GM10248 (cell line): ENCODE measurements at regions of chr17 and their contacts with region 1.

Region 1: DNA sequence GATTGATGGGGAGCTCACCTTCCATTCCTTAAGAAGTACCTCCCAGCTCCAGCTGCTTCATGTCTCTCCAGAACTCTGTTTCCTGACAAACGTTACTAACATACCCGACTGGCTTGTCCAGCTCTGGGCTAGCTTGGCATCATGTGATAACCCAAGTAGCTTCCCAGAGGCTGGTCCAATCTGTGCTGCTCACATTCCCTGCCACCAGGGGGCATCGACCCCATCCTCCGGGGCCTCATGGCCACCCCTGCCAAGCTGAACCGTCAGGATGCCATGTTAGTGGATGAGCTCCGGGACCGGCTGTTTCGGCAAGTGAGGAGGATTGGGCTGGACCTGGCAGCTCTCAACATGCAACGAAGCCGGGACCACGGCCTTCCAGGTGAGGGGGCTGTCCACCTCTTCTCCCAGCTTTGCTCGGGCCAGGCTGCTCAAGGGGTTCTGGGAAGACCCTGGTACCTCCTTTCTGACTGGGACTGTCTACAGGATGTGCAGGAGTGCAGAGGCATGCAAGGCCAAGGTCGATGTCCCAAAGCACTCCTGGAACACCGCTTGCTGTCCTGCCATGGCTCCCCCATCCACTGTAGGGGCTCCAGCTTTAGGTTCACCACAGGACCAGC is 7.6 kb downstream of the EPX start:
- DNase-seq: peak; percentile 72
- CTCF ChIP-seq: peak; percentile 74

Region 2: DNA sequence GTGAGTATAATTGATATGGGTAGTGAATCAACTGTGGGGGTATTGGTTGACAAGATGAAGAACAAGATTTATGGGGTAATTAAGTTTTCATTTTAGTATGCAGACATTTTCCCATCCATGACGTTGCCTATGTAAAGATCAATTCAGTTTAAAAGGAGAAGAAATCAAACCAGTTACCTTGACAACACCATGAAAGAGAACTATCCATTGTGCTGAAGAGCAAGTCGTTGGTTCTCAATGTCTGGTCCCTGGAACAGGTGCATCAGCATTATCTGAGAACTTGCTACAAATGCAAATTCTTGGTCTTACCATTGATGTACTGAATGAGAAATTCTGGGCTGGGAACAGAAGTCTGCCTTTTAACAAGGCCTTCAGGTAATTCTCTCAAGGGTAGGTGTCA is 34.1 kb before region 1 on chr17:
- CTCF ChIA-PET with region 1: interaction called, 10 read pairs
- POLR2A ChIA-PET with region 1: no interaction called
- DNase-seq: no peak
- CTCF ChIP-seq: no peak

Region 3: GRCh38 chr17:58189436-58190146 is 10.5 kb before region 1 on chr17:
- CTCF ChIA-PET with region 1: interaction called, 38 read pairs
- POLR2A ChIA-PET with region 1: no interaction called
- DNase-seq: no peak
- CTCF ChIP-seq: no peak

Region 4: GRCh38 chr17:58219001-58219788 is 19.1 kb after region 1 on chr17 and contains the start of gene MKS1:
- CTCF ChIA-PET with region 1: interaction called, 77 read pairs
- POLR2A ChIA-PET with region 1: no interaction called
- DNase-seq: peak; percentile 99
- CTCF ChIP-seq: peak; percentile 72

Region 5: GRCh38 chr17:58277107-58277801 is 77.1 kb after region 1 on chr17:
- CTCF ChIA-PET with region 1: interaction called, 10 read pairs
- POLR2A ChIA-PET with region 1: no interaction called
- DNase-seq: peak; percentile 48
- CTCF ChIP-seq: peak; percentile 56

Region 6: GRCh38 chr17:58402047-58402446 is 201.9 kb after region 1 on chr17:
- CTCF ChIA-PET with region 1: no interaction called
- POLR2A ChIA-PET with region 1: no interaction called
- DNase-seq: no peak
- CTCF ChIP-seq: no peak